HEK293 (cell line): ENCODE measurements at regions of chr15 and their contacts with region 1.

Region 1: GRCh38 chr15:90233376-90234095 is at the start of gene CIB1:
- H3K4me3 ChIP-seq: peak within 1 kb of the TSS; percentile 74
- H3K27ac ChIP-seq: peak within 1 kb of the TSS; percentile 47; the same call in 1 of the 2 replicates
- H3K4me1 ChIP-seq: no peaks in the 10 kb centered on the region
- CTCF ChIP-seq: peak; percentile 81

Region 2: GRCh38 chr15:90201130-90201949 is 32.2 kb before region 1 on chr15 and contains the start of gene SEMA4B:
- CTCF ChIA-PET with region 1: no interaction called
- POLR2A ChIA-PET with region 1: interaction called, 17 read pairs
- H3K4me3 ChIP-seq: peak within 1 kb of the TSS; percentile 67
- H3K27ac ChIP-seq: peak within 1 kb of the TSS; percentile 56; the same call in 1 of the 2 replicates
- H3K4me1 ChIP-seq: peaks cover 8% of the 10 kb centered on the region
- CTCF ChIP-seq: peak; percentile 21; the same call in 1 of the 2 replicates

Region 3: GRCh38 chr15:90221246-90221900 is 12.2 kb before region 1 on chr15:
- CTCF ChIA-PET with region 1: interaction called, 38 read pairs
- POLR2A ChIA-PET with region 1: interaction called, 8 read pairs
- H3K4me3 ChIP-seq: no peak overlapping the region
- H3K27ac ChIP-seq: no peak overlapping the region
- H3K4me1 ChIP-seq: peaks cover 6% of the 10 kb centered on the region; the same call in 1 of the 2 replicates
- CTCF ChIP-seq: peak; percentile 75

Region 4: DNA sequence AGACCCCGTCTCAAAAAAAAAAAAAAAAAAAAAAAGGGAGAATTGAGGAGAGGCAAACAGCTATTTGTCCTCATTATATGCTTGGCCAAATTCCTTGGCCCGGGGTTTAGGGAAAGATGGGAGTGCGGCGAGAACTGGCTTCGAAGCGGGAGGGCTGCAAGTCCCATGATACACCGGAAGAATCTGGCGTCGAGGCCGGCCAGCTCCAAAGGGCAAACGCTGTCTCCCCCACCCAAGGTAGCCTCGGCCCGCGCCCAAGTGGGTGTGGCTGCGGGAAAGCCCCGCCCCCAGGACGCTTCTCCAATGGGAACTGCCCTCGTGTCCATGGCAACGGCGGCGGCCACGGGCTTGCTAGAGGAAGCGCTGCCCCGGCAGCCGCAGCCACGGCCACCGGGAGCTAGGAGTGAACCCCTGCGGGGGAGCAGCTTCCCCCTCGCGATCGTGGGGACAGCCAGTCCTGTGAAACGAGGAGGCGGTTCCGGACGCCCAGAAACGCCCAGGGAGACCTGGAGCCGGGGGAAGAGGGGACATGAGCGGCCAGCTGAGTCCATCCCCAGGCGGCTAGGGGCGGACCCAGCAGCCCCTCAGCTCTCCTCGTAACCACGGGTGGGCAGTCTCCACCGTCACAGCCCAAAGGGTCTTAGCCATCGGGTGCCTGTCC is 15.8 kb after region 1 on chr15 and contains the start of gene TTLL13:
- CTCF ChIA-PET with region 1: interaction called, 9 read pairs
- POLR2A ChIA-PET with region 1: interaction called, 38 read pairs
- H3K4me3 ChIP-seq: peak within 1 kb of the TSS; percentile 73
- H3K27ac ChIP-seq: no peak within 1 kb of the TSS
- H3K4me1 ChIP-seq: no peaks in the 10 kb centered on the region; the same call in 1 of the 2 replicates
- CTCF ChIP-seq: peak; percentile 60

Region 5: DNA sequence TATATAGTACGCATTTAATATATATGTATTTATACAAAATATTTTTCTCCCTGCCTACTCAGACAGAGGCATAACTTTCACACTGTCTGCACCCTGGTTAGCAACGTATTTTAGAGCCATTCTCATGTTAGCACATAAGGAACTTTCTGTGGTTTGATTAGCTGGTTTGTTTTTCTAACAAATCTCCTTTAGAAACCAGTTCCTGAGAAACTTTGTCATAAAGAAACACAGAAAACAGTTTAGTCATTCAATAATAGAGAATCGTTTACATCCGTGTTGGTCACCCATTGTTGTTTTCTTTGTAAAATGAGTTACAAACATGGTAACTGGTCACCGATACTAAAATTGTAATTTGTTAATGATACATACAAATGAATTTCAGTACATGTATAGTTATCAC is 26.0 kb after region 1 on chr15:
- CTCF ChIA-PET with region 1: no interaction called
- POLR2A ChIA-PET with region 1: interaction called, 18 read pairs
- H3K4me3 ChIP-seq: no peak overlapping the region
- H3K27ac ChIP-seq: no peak overlapping the region
- H3K4me1 ChIP-seq: no peaks in the 10 kb centered on the region
- CTCF ChIP-seq: no peak

Region 6: DNA sequence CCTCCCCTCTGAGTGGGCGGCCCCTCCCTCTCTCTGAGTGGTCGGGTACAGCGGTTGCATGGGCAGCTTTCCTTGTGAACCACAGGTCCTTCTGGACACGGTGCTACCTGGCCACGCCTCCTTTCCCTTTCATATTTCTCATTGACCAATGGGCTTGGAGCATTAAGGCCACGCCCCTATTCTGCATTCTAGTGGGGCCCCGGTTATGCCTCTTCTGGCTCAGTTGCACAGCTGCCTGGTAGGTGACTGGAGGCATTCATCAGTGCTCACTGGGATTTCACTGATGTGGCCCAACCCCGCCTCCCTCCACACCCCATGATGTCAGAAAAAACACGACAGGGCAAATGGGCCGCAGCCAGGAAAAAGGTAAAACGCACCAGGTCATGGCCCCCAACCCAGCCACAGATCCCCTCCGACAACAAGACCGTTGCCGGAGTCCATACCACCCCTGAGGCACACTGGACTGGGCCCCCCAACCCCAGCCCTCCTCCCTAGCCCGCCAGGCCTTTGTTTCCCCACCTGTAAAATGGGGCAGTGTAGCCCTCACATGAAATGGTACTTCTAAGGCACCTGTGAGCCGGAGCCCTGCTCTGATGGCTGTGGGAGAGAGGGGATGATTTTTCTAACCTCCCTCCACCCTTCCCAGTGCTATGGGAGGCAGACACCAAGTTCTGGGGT is 58.3 kb after region 1 on chr15:
- CTCF ChIA-PET with region 1: interaction called, 11 read pairs
- POLR2A ChIA-PET with region 1: interaction called, 10 read pairs
- H3K4me3 ChIP-seq: no peak overlapping the region
- H3K27ac ChIP-seq: no peak overlapping the region
- H3K4me1 ChIP-seq: no peaks in the 10 kb centered on the region
- CTCF ChIP-seq: no peak